ENCODE measurements at regions of chr12 and their contacts with region 1.

Region 1: DNA sequence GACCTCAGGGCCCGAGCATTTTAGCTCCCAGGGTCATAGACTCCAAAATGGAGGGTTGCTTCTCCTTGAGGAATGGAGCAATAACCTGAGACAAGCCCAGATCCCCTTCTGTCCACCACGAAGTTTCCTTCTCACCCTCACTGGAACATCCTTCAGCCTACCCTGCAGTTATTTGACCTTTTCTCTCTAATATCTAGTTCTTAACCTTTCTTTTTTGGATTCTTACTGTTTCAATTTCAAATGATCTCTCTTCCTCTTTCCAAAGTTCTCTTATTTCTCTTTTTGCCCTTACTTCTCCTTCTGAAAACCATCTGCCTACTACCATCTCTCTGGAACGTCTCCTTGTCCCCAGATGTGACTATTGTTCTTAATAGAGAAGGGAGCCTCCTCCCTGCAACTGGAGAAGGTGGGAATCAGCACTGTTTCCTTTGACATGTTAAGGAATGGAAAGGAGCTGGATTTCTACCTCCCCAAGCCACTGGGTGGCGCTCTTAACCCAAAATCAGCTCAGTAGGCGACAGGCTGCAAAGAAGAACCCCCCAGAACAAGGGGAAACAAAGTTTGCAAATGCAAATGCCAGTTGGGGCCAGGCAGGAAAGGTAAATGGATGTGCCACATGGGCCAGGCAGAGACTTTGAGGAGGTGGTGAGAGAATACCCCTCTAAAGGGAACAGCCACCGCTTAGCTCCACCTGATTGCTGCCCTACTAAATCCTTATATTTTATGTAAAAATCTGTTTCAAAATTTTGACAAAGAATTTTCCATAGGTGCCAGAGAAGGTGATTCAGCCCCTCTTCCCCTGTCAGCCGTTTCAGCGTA is 22.4 kb upstream of the PDE1B start:
- DNase-seq: peak; percentile 70
- ATAC-seq: peak; percentile 51
- H3K4me3 Mint-ChIP-seq: no peak overlapping the region
- H3K27ac Mint-ChIP-seq: no peak overlapping the region
- H3K4me1 Mint-ChIP-seq: peaks cover 9% of the 10 kb centered on the region
- H3K27me3 Mint-ChIP-seq: no peaks in the 10 kb centered on the region
- CTCF ChIP-seq: peak; percentile 91

Region 2: GRCh38 chr12:53938326-53939140 is 588.5 kb before region 1 on chr12 and contains the start of gene HOXC13:
- CTCF ChIA-PET with region 1: no interaction called
- POLR2A ChIA-PET with region 1: no interaction called
- intact Hi-C with region 1: no loop called
- DNase-seq: peak; percentile 54
- ATAC-seq: peak; percentile 56
- H3K4me3 Mint-ChIP-seq: no peak within 1 kb of the TSS
- H3K27ac Mint-ChIP-seq: no peak within 1 kb of the TSS
- H3K4me1 Mint-ChIP-seq: peaks cover 4% of the 10 kb centered on the region
- H3K27me3 Mint-ChIP-seq: peaks cover 78% of the 10 kb centered on the region
- CTCF ChIP-seq: no peak
- total RNA-seq, gene HOXC13: not detected

Region 3: DNA sequence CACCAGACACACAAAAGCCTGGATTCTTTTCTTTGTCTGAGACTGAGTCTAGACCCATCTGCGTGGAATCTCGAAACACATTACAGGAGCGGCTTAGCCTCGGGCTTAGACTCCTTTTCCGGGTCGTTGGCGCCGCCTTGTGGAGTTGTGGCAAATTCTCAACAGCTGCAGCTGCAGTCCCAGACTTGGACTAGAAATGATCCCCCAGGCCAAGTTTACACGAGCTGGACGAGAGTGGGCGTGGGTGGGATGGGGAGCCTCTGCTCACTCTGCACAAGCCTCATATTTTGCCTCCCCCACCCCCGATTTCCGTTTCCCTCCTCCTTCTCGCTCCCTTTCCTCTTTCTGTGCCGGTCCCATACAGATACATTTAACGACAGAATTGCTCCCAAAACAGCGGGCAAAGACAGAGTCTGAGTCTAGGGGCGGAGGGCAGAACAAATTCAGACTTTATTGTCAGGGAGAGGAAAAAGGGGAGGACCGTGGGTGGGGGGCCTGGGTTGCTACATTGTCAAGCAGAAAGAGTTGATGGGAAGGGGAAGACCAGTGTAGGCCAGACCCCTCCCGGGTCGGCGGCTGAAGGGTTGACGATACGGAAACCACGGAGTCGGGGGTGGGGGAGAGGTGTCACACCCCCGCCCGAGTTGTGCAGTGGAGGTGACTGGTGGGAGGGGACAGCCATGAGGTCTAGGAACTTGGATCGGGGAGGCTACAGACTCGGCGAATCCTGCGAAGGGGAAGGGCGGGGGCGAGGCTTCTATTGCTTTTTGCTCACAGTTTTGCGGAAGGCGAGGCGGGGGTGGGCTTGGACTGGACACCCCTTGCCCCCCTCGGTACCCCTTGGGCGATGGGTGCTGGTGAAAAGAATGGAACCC is 158.1 kb before region 1 on chr12:
- CTCF ChIA-PET with region 1: no interaction called
- POLR2A ChIA-PET with region 1: no interaction called
- intact Hi-C with region 1: no loop called
- DNase-seq: peak; percentile 93
- ATAC-seq: peak; percentile 76
- H3K4me3 Mint-ChIP-seq: peak overlapping the region; percentile 7
- H3K27ac Mint-ChIP-seq: no peak overlapping the region
- H3K4me1 Mint-ChIP-seq: peaks cover 45% of the 10 kb centered on the region
- H3K27me3 Mint-ChIP-seq: peaks cover 3% of the 10 kb centered on the region
- CTCF ChIP-seq: peak; percentile 80

Region 4: DNA sequence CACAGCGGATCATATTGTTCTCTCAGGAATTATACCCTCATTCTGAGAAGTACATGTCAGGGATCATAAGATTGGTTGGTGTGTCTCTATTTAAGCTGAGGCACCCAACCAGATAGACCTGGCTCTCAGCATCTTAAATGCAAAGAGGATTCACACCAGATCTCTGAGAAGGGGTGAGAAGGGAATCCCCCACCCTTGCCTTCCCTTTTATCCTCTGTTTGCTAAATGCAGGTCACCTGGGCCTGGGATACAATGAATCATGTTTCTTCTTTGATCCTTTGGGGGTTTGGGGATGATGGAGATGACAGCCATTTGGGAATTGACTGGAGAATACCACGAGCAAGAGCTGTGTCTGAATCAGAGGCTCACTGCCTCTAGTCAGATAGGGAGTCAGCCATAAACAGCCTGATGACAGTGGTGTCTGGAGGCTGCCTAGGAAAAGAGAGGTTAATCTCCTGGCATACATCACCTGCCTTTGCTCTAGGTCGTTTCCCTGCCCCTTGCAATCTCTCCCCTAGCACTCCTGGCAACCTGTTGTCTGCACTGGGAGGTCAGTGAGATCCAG is 11.2 kb after region 1 on chr12:
- CTCF ChIA-PET with region 1: interaction called, 65 read pairs
- POLR2A ChIA-PET with region 1: interaction called, 3 read pairs
- intact Hi-C with region 1: no loop called
- DNase-seq: no peak
- ATAC-seq: no peak
- H3K4me3 Mint-ChIP-seq: no peak overlapping the region
- H3K27ac Mint-ChIP-seq: peak overlapping the region; percentile 41
- H3K4me1 Mint-ChIP-seq: peaks cover 15% of the 10 kb centered on the region
- H3K27me3 Mint-ChIP-seq: no peaks in the 10 kb centered on the region
- CTCF ChIP-seq: no peak

Region 5: DNA sequence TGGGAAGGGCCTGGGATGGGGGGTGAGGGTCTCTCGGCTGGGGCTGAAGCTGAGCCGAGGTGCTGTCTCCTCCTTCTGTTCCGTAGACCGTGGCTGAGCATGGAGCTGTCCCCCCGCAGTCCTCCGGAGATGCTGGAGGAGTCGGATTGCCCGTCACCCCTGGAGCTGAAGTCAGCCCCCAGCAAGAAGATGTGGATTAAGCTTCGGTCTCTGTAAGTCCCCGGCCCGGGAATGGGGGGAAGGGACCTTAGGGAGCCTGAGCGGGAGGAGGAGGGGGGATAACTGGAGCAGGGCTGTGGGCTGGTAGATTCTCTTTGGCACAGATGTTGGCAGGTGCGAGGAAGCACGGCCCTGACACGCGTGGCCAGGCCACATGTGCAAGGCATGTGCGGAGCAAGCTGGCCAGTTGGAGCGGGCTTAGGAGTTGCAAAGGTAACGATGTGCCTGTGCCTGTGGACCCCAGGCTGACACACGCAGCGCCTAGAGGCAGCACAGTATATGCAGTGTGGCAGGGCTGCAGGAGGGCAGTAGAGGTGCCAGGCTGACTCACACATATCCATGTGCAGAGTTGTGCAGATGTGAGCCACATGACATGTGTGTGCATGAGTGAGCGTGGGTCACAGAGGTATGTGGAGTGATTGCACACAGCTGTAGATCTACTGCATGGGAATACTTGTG is 22.9 kb after region 1 on chr12:
- CTCF ChIA-PET with region 1: interaction called, 65 read pairs
- POLR2A ChIA-PET with region 1: interaction called, 3 read pairs
- intact Hi-C with region 1: no loop called
- DNase-seq: peak; percentile 63
- ATAC-seq: peak; percentile 87
- H3K4me3 Mint-ChIP-seq: peak overlapping the region; percentile 77
- H3K27ac Mint-ChIP-seq: no peak overlapping the region
- H3K4me1 Mint-ChIP-seq: peaks cover 34% of the 10 kb centered on the region
- H3K27me3 Mint-ChIP-seq: peaks cover 8% of the 10 kb centered on the region
- CTCF ChIP-seq: no peak

Region 6: DNA sequence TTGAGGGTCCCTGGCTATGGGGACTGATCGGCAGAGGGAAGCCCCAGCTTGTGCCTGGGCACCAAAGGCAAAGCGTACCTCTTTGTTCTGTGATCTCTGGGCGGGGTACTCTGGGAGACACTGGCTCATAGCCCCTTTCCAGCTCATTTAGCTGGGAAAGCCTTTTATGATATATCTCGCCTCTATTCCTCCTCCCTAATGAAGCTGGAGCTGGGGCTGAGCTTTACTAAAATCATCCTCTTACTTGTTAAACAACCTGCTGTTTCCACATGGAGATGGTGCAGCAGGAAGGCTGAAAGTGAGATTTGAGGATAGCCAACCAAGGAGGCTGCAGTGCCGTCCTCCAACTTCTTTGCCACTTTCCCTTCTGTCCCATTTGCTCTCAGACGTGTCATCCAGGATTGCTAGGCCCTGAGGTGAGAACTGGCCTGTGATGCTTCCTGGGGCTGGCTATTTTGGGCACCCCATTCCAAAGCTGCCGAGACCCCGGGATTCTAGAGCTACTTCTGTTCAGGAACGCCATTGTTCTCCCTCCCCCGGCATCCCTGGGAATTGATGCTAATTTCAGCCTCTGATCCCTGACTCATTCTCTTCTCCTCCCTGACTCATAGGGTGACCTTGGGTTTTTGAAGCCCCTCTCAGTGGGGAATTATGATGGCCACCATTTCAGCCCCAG is 38.4 kb after region 1 on chr12:
- CTCF ChIA-PET with region 1: interaction called, 10 read pairs
- POLR2A ChIA-PET with region 1: interaction called, 4 read pairs
- intact Hi-C with region 1: no loop called
- DNase-seq: no peak
- ATAC-seq: no peak
- H3K4me3 Mint-ChIP-seq: no peak overlapping the region
- H3K27ac Mint-ChIP-seq: no peak overlapping the region
- H3K4me1 Mint-ChIP-seq: peaks cover 13% of the 10 kb centered on the region
- H3K27me3 Mint-ChIP-seq: no peaks in the 10 kb centered on the region
- CTCF ChIP-seq: no peak

Region 7: DNA sequence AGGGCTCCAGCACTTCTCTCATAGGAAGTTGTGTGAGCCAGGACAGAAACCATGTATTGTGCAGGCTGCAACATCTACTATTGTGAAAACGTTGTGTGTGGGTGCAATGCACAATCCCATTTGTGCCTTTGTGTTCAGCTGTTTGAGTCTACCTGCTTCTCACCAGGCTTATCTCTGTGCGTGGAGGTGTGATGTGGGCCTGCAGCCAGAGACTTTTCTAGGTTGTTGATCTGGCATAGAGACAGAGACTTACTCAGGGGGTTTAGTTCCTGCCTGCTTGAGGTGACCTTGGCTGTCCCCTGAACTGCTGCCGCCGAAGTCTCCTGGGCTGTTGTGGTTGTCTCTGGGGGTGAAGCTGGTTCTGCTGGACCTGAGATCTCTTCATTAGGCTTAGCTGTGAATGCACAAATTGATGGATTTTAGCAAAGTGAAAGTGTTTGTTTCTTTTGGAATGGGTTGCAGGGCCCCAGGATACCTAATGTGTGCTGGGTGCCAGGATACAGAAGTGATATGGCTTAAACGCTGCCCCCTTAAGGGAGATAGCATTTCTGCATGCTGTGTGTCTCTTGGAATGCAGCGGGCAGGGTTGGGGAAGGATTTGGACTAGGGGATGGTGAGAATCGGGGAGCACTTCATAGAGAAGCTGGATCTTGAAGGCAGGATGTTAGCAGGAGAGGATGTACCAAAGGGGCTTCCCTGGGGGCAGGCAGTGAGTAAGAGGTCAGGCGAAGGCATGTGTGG is 105.1 kb after region 1 on chr12:
- CTCF ChIA-PET with region 1: no interaction called
- POLR2A ChIA-PET with region 1: no interaction called
- intact Hi-C with region 1: no loop called
- DNase-seq: no peak
- ATAC-seq: no peak
- H3K4me3 Mint-ChIP-seq: no peak overlapping the region
- H3K27ac Mint-ChIP-seq: no peak overlapping the region
- H3K4me1 Mint-ChIP-seq: peaks cover 3% of the 10 kb centered on the region
- H3K27me3 Mint-ChIP-seq: peaks cover 21% of the 10 kb centered on the region
- CTCF ChIP-seq: no peak

Region 8: GRCh38 chr12:54786081-54786480 is 259.1 kb after region 1 on chr12:
- CTCF ChIA-PET with region 1: no interaction called
- POLR2A ChIA-PET with region 1: no interaction called
- intact Hi-C with region 1: no loop called
- DNase-seq: no peak
- ATAC-seq: no peak
- H3K4me3 Mint-ChIP-seq: no peak overlapping the region
- H3K27ac Mint-ChIP-seq: no peak overlapping the region
- H3K4me1 Mint-ChIP-seq: no peaks in the 10 kb centered on the region
- H3K27me3 Mint-ChIP-seq: peaks cover 1% of the 10 kb centered on the region
- CTCF ChIP-seq: no peak